HEK293 (cell line): ENCODE measurements at regions of chr3 and their contacts with region 1.

Region 1: GRCh38 chr3:151282921-151283320 is 4.6 kb upstream of the P2RY14 start:
- H3K4me3 ChIP-seq: no peak overlapping the region
- H3K27ac ChIP-seq: no peak overlapping the region
- H3K4me1 ChIP-seq: 0 out of 2 replicates have a peak, but pooled peaks cover 2% of the 10 kb centered on the region
- CTCF ChIP-seq: no peak

Region 2: DNA sequence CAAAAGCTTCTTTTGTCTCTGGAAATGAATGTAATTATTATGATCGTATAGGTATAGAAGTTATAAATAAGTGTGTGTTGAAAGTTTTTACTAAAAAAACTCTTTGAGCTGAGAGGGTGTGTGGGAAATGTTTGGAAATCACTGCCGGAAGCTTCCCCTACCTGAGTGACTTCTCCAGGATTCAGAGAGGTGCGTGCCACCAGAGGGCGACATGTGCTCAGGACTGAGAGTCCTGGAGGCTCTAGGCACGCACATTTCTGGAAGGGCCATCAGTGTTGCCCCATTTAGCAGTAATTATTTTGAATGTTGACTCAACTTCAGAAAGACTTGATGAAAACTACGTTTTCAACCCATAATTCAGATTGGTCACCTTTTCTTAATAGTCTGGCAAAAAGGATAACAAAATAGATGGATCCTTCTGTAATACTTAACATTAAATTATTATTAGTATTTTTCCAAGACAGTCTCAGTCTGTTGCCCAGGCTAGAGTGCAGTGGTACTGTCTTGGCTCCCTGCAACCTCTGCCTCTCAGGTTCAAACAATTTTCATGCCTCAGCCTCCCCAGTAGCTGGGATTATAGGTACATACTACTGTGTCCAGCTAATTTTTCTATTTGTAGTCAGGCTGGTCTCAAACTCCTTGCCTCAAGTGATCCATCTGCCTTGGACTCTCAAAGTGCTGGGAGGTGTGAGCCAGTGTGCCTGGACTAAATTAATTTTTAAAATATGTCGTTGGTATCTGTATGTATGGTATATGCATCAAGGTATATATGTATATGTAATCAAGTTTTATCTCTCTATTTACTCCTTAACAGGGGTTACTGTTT is 114.4 kb before region 1 on chr3:
- CTCF ChIA-PET with region 1: interaction called, 10 read pairs
- POLR2A ChIA-PET with region 1: no interaction called
- H3K4me3 ChIP-seq: no peak overlapping the region
- H3K27ac ChIP-seq: no peak overlapping the region
- H3K4me1 ChIP-seq: no peaks in the 10 kb centered on the region
- CTCF ChIP-seq: peak; percentile 46; the same call in 1 of the 2 replicates

Region 3: DNA sequence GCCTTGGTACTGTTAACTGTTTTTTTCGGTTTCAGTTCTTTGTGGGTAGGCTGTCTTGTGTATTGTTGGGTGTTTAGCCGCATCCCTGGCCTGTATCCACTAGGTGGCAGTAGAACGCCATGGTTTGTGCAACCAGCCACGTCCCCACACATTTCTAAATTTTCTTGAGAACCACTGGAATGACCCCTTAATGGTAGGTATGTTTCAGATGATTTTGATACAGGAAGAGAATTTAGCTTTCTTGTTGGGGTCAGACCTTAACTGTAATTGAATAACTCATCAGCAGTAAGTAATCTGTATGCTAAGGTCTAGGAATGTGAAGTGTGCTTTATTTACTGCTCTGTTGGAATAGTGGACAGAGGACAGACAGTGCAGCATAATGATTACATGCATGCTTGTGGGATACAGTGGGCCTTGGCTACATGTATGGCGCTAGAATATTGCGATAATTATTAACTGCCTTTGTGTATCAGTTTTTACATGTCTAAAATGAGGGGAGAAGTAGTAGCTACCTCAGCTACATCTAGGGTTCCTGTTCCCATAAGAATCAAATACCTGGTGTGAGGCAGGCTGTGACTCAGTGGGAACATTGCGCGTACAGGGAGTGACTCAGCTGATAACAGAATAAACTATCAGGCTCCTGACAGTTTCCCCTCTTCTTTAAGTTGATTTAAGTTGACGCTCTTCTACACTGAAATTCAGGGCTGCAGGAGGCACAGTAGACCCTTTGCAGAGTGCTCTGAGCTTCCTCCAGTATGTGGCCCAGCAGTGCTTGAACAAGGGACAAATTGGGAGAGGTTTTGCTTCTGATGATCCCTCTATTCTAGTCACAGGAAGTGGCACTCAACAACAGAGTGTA is 54.9 kb before region 1 on chr3:
- CTCF ChIA-PET with region 1: interaction called, 32 read pairs
- POLR2A ChIA-PET with region 1: no interaction called
- H3K4me3 ChIP-seq: no peak overlapping the region
- H3K27ac ChIP-seq: no peak overlapping the region
- H3K4me1 ChIP-seq: no peaks in the 10 kb centered on the region
- CTCF ChIP-seq: peak; percentile 23; the same call in 1 of the 2 replicates

Region 4: GRCh38 chr3:151308089-151308488 is 25.2 kb after region 1 on chr3:
- CTCF ChIA-PET with region 1: no interaction called
- POLR2A ChIA-PET with region 1: no interaction called
- H3K4me3 ChIP-seq: no peak overlapping the region
- H3K27ac ChIP-seq: no peak overlapping the region
- H3K4me1 ChIP-seq: no peaks in the 10 kb centered on the region
- CTCF ChIP-seq: no peak